Ascending aorta (tissue), 2 donors: ENCODE measurements at regions of chr9 and their contacts with region 1.

Region 1: DNA sequence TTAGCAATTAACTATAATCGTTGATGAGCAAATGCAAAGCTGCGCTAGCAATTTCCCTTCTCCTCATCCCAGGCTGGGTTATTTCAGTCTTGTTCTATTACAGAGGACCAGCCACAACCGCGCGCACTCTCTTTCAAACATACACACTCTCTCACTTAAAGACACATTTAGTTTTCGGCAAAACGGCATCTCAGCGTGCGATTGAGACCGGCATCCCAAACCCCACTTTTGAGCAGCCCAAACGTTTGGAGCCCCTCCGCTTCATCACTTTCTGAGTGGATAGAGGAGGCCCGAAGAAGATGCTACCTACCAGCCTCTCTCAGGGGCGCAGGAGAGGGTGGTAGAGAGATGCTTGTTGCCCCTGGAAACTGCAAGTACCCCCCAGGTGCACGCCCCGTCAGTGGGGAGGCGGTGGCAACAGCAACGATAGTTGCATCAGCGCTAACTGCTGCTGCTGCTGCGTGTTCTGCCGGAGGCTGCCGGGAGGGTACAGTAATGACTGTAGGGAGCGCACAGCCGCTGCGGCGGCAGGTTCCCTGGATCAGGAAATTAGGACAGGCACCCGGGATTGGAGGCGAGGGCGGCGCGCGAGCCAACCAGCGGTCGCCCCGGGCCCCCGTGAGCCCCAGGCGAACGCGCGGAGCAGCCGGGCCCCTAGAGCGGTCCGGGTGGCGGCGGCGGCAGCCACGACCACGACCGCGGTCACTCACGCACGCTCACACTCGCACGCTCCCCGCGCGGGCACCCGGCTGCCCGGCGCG is 488 bp upstream of the VLDLR start:
- DNase-seq: peak in 1 of 2 donors; percentile 90
- H3K4me3 ChIP-seq: peak overlapping the region; percentile 84 to 86
- H3K27ac ChIP-seq: peak overlapping the region in 1 of 2 donors; percentile 81
- H3K4me1 ChIP-seq: no peaks in the 10 kb centered on the region
- H3K27me3 ChIP-seq: no peaks in the 10 kb centered on the region
- CTCF ChIP-seq: peak in 1 of 3 experiments; percentile 40

Region 2: GRCh38 chr9:2014696-2015580 is 606.2 kb before region 1 on chr9 and contains the start of gene SMARCA2:
- intact Hi-C with region 1: loop called (anchors 2 kb)
- DNase-seq: peak; percentile 95 to 99
- H3K4me3 ChIP-seq: peak within 1 kb of the TSS; percentile 92 to 96
- H3K27ac ChIP-seq: peak within 1 kb of the TSS; percentile 99 to 100
- H3K4me1 ChIP-seq: peaks cover 0 to 19% of the 10 kb centered on the region in 2 donors
- H3K27me3 ChIP-seq: no peaks in the 10 kb centered on the region
- CTCF ChIP-seq: no peak
- total RNA-seq, gene SMARCA2: 160 TPM

Region 3: GRCh38 chr9:2241836-2242741 is 379.0 kb before region 1 on chr9:
- intact Hi-C with region 1: loop called (anchors 5 kb)
- DNase-seq: peak; percentile 23 to 84
- H3K4me3 ChIP-seq: peak overlapping the region; percentile 52 to 66
- H3K27ac ChIP-seq: no peak overlapping the region
- H3K4me1 ChIP-seq: peaks cover 3% of the 10 kb centered on the region in 2 donors
- H3K27me3 ChIP-seq: no peaks in the 10 kb centered on the region
- CTCF ChIP-seq: peak in 1 of 3 experiments; percentile 6

Region 4: GRCh38 chr9:2727966-2728613 is 107.0 kb after region 1 on chr9:
- intact Hi-C with region 1: loop called (anchors 10 kb)
- DNase-seq: no peak
- H3K4me3 ChIP-seq: no peak overlapping the region
- H3K27ac ChIP-seq: no peak overlapping the region
- H3K4me1 ChIP-seq: peaks cover 0 to 6% of the 10 kb centered on the region in 2 donors
- H3K27me3 ChIP-seq: no peaks in the 10 kb centered on the region
- CTCF ChIP-seq: peak; percentile 20 to 51 (median 35)

Region 5: GRCh38 chr9:2740616-2741015 is 119.5 kb after region 1 on chr9:
- intact Hi-C with region 1: no loop called
- DNase-seq: no peak
- H3K4me3 ChIP-seq: no peak overlapping the region
- H3K27ac ChIP-seq: no peak overlapping the region
- H3K4me1 ChIP-seq: no peaks in the 10 kb centered on the region
- H3K27me3 ChIP-seq: no peaks in the 10 kb centered on the region
- CTCF ChIP-seq: no peak

Region 6: DNA sequence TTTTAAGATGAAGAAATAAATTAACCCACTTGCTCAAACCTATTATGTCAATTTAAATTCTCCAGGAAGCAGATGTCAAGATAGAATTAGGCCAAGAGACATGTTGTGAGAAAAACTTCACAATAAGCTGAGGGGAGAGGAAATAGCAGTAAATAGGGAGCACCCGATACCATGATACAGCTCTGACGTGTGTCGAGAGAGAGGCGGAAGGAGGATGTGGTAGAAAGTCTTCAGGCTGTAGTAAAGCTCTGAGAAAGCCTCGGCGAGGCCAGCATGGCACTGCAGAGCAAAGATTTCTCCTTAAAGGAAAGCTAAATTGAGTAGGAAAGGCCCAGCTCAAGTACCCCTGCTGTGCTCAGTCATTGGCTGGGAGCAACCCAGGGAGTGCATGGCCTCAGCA is 228.8 kb after region 1 on chr9:
- intact Hi-C with region 1: loop called (anchors 2 kb)
- DNase-seq: no peak
- H3K4me3 ChIP-seq: no peak overlapping the region
- H3K27ac ChIP-seq: no peak overlapping the region
- H3K4me1 ChIP-seq: peaks cover 0 to 6% of the 10 kb centered on the region in 2 donors
- H3K27me3 ChIP-seq: no peaks in the 10 kb centered on the region
- CTCF ChIP-seq: no peak